Gastrocnemius medialis (tissue), 4 donors: ENCODE measurements at regions of chr3 and their contacts with region 1.

Region 1: GRCh38 chr3:187963677-187964385 is 190.1 kb upstream of the LPP start:
- DNase-seq: peak; percentile 44 to 64
- ATAC-seq: peak; percentile 91 to 94
- H3K4me3 ChIP-seq: no peak overlapping the region
- H3K27ac ChIP-seq: peak overlapping the region; percentile 88 to 95 (median 90)
- H3K4me1 ChIP-seq: peaks cover 40 to 62% of the 10 kb centered on the region in 2 donors
- H3K27me3 ChIP-seq: no peaks in the 10 kb centered on the region
- CTCF ChIP-seq: no peak
- POLR2A ChIP-seq: no peak

Region 2: DNA sequence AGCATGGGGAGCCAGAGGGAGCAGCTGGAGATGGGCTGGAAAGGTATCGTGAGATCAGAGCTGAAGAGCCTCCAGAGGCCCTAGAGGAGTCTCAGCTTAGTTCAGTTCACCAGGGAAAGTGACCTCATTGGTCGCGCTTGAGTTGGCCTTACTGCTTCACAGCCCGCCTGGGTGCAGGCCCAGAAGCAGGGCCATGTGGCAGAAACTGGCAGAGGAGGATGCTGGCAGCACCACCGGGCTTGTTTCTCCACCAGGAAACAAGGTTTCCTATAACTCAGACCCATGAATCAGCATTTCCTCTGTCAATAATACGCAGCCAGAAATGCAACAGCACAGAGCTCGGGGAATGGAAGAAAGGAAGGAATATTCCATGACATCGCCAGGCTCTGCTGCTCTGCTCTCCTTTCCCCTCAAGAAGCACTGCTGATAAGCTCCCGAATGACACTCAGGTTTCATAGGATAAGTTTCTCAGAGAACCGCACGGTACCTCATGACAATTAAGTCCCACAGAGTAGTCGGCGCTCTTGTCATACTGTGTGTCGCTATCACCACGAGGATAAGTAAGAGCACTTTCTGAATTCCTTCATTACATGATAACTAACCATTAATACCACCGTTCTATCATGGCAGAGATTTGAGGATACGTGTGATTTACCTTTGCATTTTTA is 43.0 kb after region 1 on chr3:
- in situ Hi-C with region 1: no loop called
- intact Hi-C with region 1: loop called (anchors 2 kb)
- DNase-seq: peak; percentile 87 to 97
- ATAC-seq: peak; percentile 86 to 90
- H3K4me3 ChIP-seq: peak overlapping the region; percentile 12 to 42 (median 26)
- H3K27ac ChIP-seq: peak overlapping the region; percentile 88 to 97 (median 90)
- H3K4me1 ChIP-seq: peaks cover 9 to 18% of the 10 kb centered on the region in 2 donors
- H3K27me3 ChIP-seq: no peaks in the 10 kb centered on the region
- CTCF ChIP-seq: peak in 2 of 5 experiments; percentile 4 to 23
- POLR2A ChIP-seq: peak; percentile 36 to 72